Mucosa of descending colon (tissue), 3 donors: ENCODE measurements at regions of chr11 and their contacts with region 1.

Region 1: GRCh38 chr11:123478352-123478987 is 48.4 kb downstream of the GRAMD1B start:
- DNase-seq: peak in 2 of 3 donors; percentile 59
- ATAC-seq: peak; percentile 89
- H3K4me3 ChIP-seq: no peak overlapping the region
- H3K4me1 ChIP-seq: no peaks in the 10 kb centered on the region
- CTCF ChIP-seq: peak; percentile 43

Region 2: GRCh38 chr11:123301696-123302400 is 176.6 kb before region 1 on chr11:
- intact Hi-C with region 1: loop called (anchors 5 kb)
- DNase-seq: peak; percentile 67 to 74 (median 70)
- ATAC-seq: peak; percentile 88
- H3K4me3 ChIP-seq: no peak overlapping the region
- H3K4me1 ChIP-seq: peaks cover 7% of the 10 kb centered on the region
- CTCF ChIP-seq: peak; percentile 81

Region 3: GRCh38 chr11:123407130-123407995 is 71.1 kb before region 1 on chr11:
- intact Hi-C with region 1: loop called in 1 of 2 experiments (anchors 2 kb)
- DNase-seq: peak in 2 of 3 donors; percentile 63 to 93
- ATAC-seq: peak; percentile 93
- H3K4me3 ChIP-seq: no peak overlapping the region
- H3K4me1 ChIP-seq: peaks cover 23% of the 10 kb centered on the region
- CTCF ChIP-seq: peak; percentile 42

Region 4: GRCh38 chr11:123654566-123655081 is 176.2 kb after region 1 on chr11 and contains the start of gene SCN3B:
- intact Hi-C with region 1: no loop called
- DNase-seq: peak; percentile 62 to 79 (median 69)
- ATAC-seq: peak; percentile 96
- H3K4me3 ChIP-seq: no peak within 1 kb of the TSS
- H3K4me1 ChIP-seq: peaks cover 2% of the 10 kb centered on the region
- CTCF ChIP-seq: no peak
- total RNA-seq, gene SCN3B: 0.29 to 2.6 (median 2.0) TPM